Natural killer cell (primary cell): ENCODE measurements at regions of chr5 and their contacts with region 1.

Region 1: DNA sequence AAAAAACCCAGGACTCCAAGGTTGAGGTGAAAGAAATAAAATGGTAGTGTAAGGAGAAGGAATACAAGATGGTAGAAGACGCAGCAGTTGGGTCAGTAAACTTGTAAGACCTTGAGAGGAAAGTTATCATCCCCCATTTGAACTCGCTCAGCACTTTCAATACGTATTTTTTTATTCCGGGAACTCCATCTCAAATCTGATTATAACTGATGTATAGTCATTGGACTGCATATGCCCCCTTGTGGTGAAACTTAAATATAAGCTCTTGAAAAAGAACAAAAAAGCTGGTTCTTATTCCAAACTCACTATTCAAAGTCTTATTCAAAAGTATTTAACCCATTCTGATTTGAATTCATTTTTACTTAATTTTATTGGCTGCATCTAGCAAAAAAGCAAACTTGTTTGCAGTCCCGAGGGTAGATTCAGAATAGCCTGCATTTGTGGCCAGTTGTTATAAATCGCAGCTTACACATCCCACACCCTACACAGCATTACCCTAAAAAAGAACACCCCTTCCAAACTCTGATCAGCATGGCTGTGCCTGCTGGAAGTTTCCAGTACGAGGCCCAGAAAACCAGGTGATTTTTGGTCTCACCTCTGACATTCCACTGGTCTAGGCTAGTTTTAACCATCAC is 118.0 kb downstream of the ESM1 start:
- DNase-seq: peak in 1 of 2 donors; percentile 75
- ATAC-seq: peak; percentile 67 to 78 (median 75)
- H3K4me3 ChIP-seq: no peak overlapping the region
- H3K4me3 Mint-ChIP-seq: peak overlapping the region; percentile 32
- H3K27ac ChIP-seq: no peak overlapping the region
- H3K27ac Mint-ChIP-seq: no peak overlapping the region
- H3K4me1 ChIP-seq: no peaks in the 10 kb centered on the region
- H3K4me1 Mint-ChIP-seq: peaks cover 4 to 8% of the 10 kb centered on the region in 2 donors
- H3K27me3 ChIP-seq: no peaks in the 10 kb centered on the region
- H3K27me3 Mint-ChIP-seq: peaks cover 2 to 40% of the 10 kb centered on the region in 2 donors
- CTCF ChIP-seq: peak; percentile 80

Region 2: GRCh38 chr5:54263447-54263846 is 604.0 kb before region 1 on chr5:
- intact Hi-C with region 1: no loop called
- DNase-seq: no peak
- ATAC-seq: no peak
- H3K4me3 ChIP-seq: no peak overlapping the region
- H3K4me3 Mint-ChIP-seq: no peak overlapping the region
- H3K27ac ChIP-seq: no peak overlapping the region
- H3K27ac Mint-ChIP-seq: no peak overlapping the region
- H3K4me1 ChIP-seq: no peaks in the 10 kb centered on the region
- H3K4me1 Mint-ChIP-seq: peaks cover 34 to 36% of the 10 kb centered on the region in 2 donors
- H3K27me3 ChIP-seq: no peaks in the 10 kb centered on the region
- H3K27me3 Mint-ChIP-seq: no peaks in the 10 kb centered on the region
- CTCF ChIP-seq: no peak

Region 3: GRCh38 chr5:54310433-54311175 is 556.8 kb before region 1 on chr5 and contains the start of gene ARL15:
- intact Hi-C with region 1: loop called (anchors 10 kb)
- DNase-seq: peak; percentile 96 to 98
- ATAC-seq: peak; percentile 93 to 98 (median 94)
- H3K4me3 ChIP-seq: peak within 1 kb of the TSS; percentile 79
- H3K4me3 Mint-ChIP-seq: peak within 1 kb of the TSS; percentile 98
- H3K27ac ChIP-seq: peak within 1 kb of the TSS; percentile 67
- H3K27ac Mint-ChIP-seq: peak within 1 kb of the TSS; percentile 90 to 98
- H3K4me1 ChIP-seq: peaks cover 14% of the 10 kb centered on the region
- H3K4me1 Mint-ChIP-seq: peaks cover 44 to 46% of the 10 kb centered on the region in 2 donors
- H3K27me3 ChIP-seq: no peaks in the 10 kb centered on the region
- H3K27me3 Mint-ChIP-seq: peaks cover 0 to 7% of the 10 kb centered on the region in 2 donors
- CTCF ChIP-seq: no peak
- total RNA-seq, gene ARL15: 28.9 to 35.1 (median 33.1) TPM

Region 4: DNA sequence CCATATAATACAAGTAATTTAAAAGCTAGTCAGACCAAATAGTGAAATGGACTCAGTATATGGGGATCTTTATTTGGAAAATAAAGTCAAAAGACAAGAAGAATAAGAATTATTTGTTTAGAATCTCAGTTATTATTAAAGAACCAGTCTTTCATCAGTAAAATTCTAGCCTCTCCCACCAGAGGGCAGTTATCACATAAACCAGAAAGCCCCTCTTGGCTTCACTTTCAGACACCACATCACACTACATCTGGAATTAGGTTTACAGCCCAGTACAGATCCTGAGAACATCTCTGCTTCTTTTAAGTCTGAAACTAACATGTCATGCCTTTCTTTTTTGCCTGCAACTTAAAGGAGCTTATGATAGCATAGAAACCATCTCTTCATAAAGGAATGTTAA is 424.2 kb before region 1 on chr5:
- intact Hi-C with region 1: loop called (anchors 5 kb)
- DNase-seq: peak in 1 of 2 donors; percentile 28
- ATAC-seq: peak in 1 of 3 donors; percentile 49
- H3K4me3 ChIP-seq: no peak overlapping the region
- H3K4me3 Mint-ChIP-seq: no peak overlapping the region
- H3K27ac ChIP-seq: no peak overlapping the region
- H3K27ac Mint-ChIP-seq: no peak overlapping the region
- H3K4me1 ChIP-seq: no peaks in the 10 kb centered on the region
- H3K4me1 Mint-ChIP-seq: no peaks in the 10 kb centered on the region
- H3K27me3 ChIP-seq: no peaks in the 10 kb centered on the region
- H3K27me3 Mint-ChIP-seq: peaks cover 5 to 18% of the 10 kb centered on the region in 2 donors
- CTCF ChIP-seq: no peak

Region 5: GRCh38 chr5:54883374-54884212 is 16.2 kb after region 1 on chr5:
- intact Hi-C with region 1: no loop called
- DNase-seq: no peak
- ATAC-seq: peak in 2 of 3 donors; percentile 41 to 53
- H3K4me3 ChIP-seq: peak overlapping the region; percentile 14
- H3K4me3 Mint-ChIP-seq: peak overlapping the region; percentile 92
- H3K27ac ChIP-seq: no peak overlapping the region
- H3K27ac Mint-ChIP-seq: peak overlapping the region; percentile 22 to 72
- H3K4me1 ChIP-seq: peaks cover 17% of the 10 kb centered on the region
- H3K4me1 Mint-ChIP-seq: peaks cover 8 to 15% of the 10 kb centered on the region in 2 donors
- H3K27me3 ChIP-seq: peaks cover 29% of the 10 kb centered on the region
- H3K27me3 Mint-ChIP-seq: peaks cover 27 to 60% of the 10 kb centered on the region in 2 donors
- CTCF ChIP-seq: no peak

Region 6: GRCh38 chr5:54905943-54906537 is 38.6 kb after region 1 on chr5:
- intact Hi-C with region 1: no loop called
- DNase-seq: peak; percentile 64 to 80
- ATAC-seq: peak in 2 of 3 donors; percentile 46 to 63
- H3K4me3 ChIP-seq: no peak overlapping the region
- H3K4me3 Mint-ChIP-seq: no peak overlapping the region
- H3K27ac ChIP-seq: no peak overlapping the region
- H3K27ac Mint-ChIP-seq: no peak overlapping the region
- H3K4me1 ChIP-seq: peaks cover 5% of the 10 kb centered on the region
- H3K4me1 Mint-ChIP-seq: peaks cover 5 to 9% of the 10 kb centered on the region in 2 donors
- H3K27me3 ChIP-seq: no peaks in the 10 kb centered on the region
- H3K27me3 Mint-ChIP-seq: peaks cover 3 to 6% of the 10 kb centered on the region in 2 donors
- CTCF ChIP-seq: peak; percentile 92

Region 7: GRCh38 chr5:55418994-55419968 is 551.9 kb after region 1 on chr5:
- intact Hi-C with region 1: no loop called
- DNase-seq: no peak
- ATAC-seq: no peak
- H3K4me3 ChIP-seq: no peak overlapping the region
- H3K4me3 Mint-ChIP-seq: no peak overlapping the region
- H3K27ac ChIP-seq: no peak overlapping the region
- H3K27ac Mint-ChIP-seq: no peak overlapping the region
- H3K4me1 ChIP-seq: no peaks in the 10 kb centered on the region
- H3K4me1 Mint-ChIP-seq: peaks cover 6 to 7% of the 10 kb centered on the region in 2 donors
- H3K27me3 ChIP-seq: no peaks in the 10 kb centered on the region
- H3K27me3 Mint-ChIP-seq: no peaks in the 10 kb centered on the region
- CTCF ChIP-seq: no peak